Activated T-helper 2 cell treated with anti-CD3 and anti-CD28 coated beads, Interferon-gamma antibody, Interleukin-2, Interleukin-4, amounts not matched to agents 10 μg/mL and 5 μg/mL and 100 μg/mL, durations not matched to agents 14 hours and 24 hours and 36 hours (primary cell): ENCODE measurements at regions of chr4 and their contacts with region 1.

Region 1: DNA sequence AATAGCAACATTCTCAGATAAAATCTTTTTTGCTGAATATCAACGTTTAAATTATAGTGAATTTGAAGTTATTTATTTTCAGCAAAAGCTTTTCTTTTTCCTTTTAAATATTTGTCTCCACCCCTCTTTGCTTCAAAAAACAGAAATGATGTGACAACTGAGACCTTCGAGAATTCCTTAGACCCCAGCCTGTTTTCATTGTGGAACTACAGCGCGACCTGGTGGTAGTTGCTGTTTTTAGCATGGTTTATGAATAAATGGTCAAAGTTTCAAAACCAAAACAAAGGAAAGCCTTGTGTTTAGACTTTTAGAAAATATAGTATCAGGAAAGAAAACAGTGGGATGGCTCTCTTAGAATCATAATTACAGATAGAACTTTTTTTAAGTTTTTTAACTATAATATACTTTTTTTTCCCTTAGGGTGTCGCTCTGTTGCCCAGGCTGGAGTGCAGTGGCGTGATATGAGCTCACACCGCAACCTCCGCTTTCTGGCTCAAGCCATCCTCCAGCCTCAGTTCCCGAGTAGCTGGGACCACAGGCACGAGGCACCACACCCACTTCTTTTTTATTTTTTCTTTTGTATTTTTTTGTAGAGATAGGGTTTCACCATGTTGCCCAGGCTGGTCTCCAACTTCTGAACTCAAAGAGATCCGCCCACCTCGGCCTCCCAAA is 26.8 kb upstream of the TMEM184C start:
- DNase-seq: no peak
- H3K4me3 Mint-ChIP-seq: no peak overlapping the region
- H3K27ac Mint-ChIP-seq: no peak overlapping the region
- H3K4me1 Mint-ChIP-seq: no peaks in the 10 kb centered on the region
- H3K27me3 Mint-ChIP-seq: peaks cover 12% of the 10 kb centered on the region

Region 2: GRCh38 chr4:147160908-147161513 is 429.4 kb before region 1 on chr4:
- intact Hi-C with region 1: loop called (anchors 10 kb)
- DNase-seq: no peak
- H3K4me3 Mint-ChIP-seq: no peak overlapping the region
- H3K27ac Mint-ChIP-seq: no peak overlapping the region
- H3K4me1 Mint-ChIP-seq: no peaks in the 10 kb centered on the region
- H3K27me3 Mint-ChIP-seq: peaks cover 7% of the 10 kb centered on the region

Region 3: DNA sequence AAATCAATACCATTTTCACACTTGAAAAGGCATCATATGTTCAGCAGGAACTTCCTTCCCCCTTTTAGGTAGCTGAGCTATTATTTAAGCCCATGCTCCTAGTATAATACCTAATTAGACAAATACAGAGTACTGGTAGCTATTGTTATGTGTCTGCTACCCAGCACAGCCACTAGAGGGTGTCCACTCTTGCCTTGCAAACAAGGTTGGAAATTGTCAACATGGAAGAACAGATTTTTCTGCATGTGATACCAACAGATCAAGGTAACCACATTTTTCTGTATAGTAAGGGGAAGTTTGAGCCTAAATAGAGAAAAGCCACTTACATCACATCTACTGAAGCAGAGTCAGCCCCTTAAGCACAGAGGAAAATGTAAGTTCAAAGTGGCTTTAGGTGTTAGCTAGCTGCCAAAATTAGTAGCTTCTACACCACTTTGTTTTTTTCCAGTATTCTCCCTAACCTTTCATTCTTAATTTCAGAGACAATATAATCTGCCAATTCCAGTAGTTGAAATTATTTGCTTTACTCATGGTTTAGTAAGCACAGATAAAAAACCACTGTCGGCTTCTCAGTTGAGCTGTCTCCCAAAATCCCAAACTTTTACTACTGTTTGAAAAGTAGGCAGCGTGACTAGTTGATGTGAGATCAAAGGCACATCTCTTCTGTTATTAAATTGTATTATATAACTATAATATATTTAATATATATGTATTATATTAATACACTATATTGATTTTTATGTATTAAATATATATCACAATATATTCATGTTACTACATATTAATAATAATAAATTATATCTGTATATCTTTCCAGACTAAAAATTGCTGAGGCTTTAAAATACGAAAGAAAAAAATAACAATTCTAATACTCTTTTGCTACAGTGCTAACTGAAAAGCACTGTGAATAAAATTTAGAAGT is 71.3 kb before region 1 on chr4:
- intact Hi-C with region 1: loop called (anchors 1 kb)
- DNase-seq: peak; percentile 19
- H3K4me3 Mint-ChIP-seq: no peak overlapping the region
- H3K27ac Mint-ChIP-seq: no peak overlapping the region
- H3K4me1 Mint-ChIP-seq: no peaks in the 10 kb centered on the region
- H3K27me3 Mint-ChIP-seq: peaks cover 1% of the 10 kb centered on the region

Region 4: GRCh38 chr4:147638942-147639341 is 48.6 kb after region 1 on chr4:
- intact Hi-C with region 1: no loop called
- DNase-seq: no peak
- H3K4me3 Mint-ChIP-seq: no peak overlapping the region
- H3K27ac Mint-ChIP-seq: no peak overlapping the region
- H3K4me1 Mint-ChIP-seq: peaks cover 11% of the 10 kb centered on the region
- H3K27me3 Mint-ChIP-seq: no peaks in the 10 kb centered on the region